Activated CD4-positive, alpha-beta T cell treated with anti-CD3 and anti-CD28 coated beads for 36 hours (primary cell): ENCODE measurements at regions of chrX and their contacts with region 1.

Region 1: GRCh38 chrX:154327038-154327820 is 31.6 kb downstream of the TKTL1 start:
- DNase-seq: peak; percentile 52
- ATAC-seq: peak; percentile 87
- H3K4me3 Mint-ChIP-seq: peak overlapping the region; percentile 39
- H3K27ac Mint-ChIP-seq: peak overlapping the region; percentile 82
- H3K4me1 Mint-ChIP-seq: peaks cover 39% of the 10 kb centered on the region
- H3K27me3 Mint-ChIP-seq: no peaks in the 10 kb centered on the region

Region 2: GRCh38 chrX:154370882-154371770 is 43.9 kb after region 1 on chrX:
- CTCF ChIA-PET with region 1: interaction called, 4 read pairs
- POLR2A ChIA-PET with region 1: no interaction called
- intact Hi-C with region 1: loop called in 1 of 2 experiments (anchors 5 kb)
- DNase-seq: peak; percentile 96
- ATAC-seq: peak; percentile 55
- H3K4me3 Mint-ChIP-seq: peak overlapping the region; percentile 86
- H3K27ac Mint-ChIP-seq: peak overlapping the region; percentile 55
- H3K4me1 Mint-ChIP-seq: peaks cover 22% of the 10 kb centered on the region
- H3K27me3 Mint-ChIP-seq: no peaks in the 10 kb centered on the region

Region 3: GRCh38 chrX:154397819-154398724 is 70.8 kb after region 1 on chrX and contains the start of gene RPL10:
- CTCF ChIA-PET with region 1: no interaction called
- POLR2A ChIA-PET with region 1: no interaction called
- intact Hi-C with region 1: no loop called
- DNase-seq: peak; percentile 94
- ATAC-seq: peak; percentile 80
- H3K4me3 Mint-ChIP-seq: peak within 1 kb of the TSS; percentile 99
- H3K27ac Mint-ChIP-seq: peak within 1 kb of the TSS; percentile 100
- H3K4me1 Mint-ChIP-seq: no peaks in the 10 kb centered on the region
- H3K27me3 Mint-ChIP-seq: no peaks in the 10 kb centered on the region
- total RNA-seq, gene RPL10: 1,286 to 2,705 TPM

Region 4: GRCh38 chrX:154411322-154411980 is 84.2 kb after region 1 on chrX and contains the start of gene TAFAZZIN:
- CTCF ChIA-PET with region 1: no interaction called
- POLR2A ChIA-PET with region 1: no interaction called
- intact Hi-C with region 1: no loop called
- DNase-seq: peak; percentile 87
- ATAC-seq: peak; percentile 73
- H3K4me3 Mint-ChIP-seq: peak within 1 kb of the TSS; percentile 86
- H3K27ac Mint-ChIP-seq: peak within 1 kb of the TSS; percentile 94
- H3K4me1 Mint-ChIP-seq: peaks cover 13% of the 10 kb centered on the region
- H3K27me3 Mint-ChIP-seq: no peaks in the 10 kb centered on the region
- total RNA-seq, gene TAFAZZIN: 43.8 to 49.0 TPM

Region 5: GRCh38 chrX:154490414-154491083 is 163.3 kb after region 1 on chrX and contains the start of gene SLC10A3:
- CTCF ChIA-PET with region 1: no interaction called
- POLR2A ChIA-PET with region 1: no interaction called
- intact Hi-C with region 1: no loop called
- DNase-seq: peak; percentile 94
- ATAC-seq: peak; percentile 91
- H3K4me3 Mint-ChIP-seq: peak within 1 kb of the TSS; percentile 85
- H3K27ac Mint-ChIP-seq: peak within 1 kb of the TSS; percentile 89
- H3K4me1 Mint-ChIP-seq: peaks cover 17% of the 10 kb centered on the region
- H3K27me3 Mint-ChIP-seq: no peaks in the 10 kb centered on the region
- total RNA-seq, gene SLC10A3: 10.4 to 11.3 TPM